ENCODE measurements at regions of chr11 and their contacts with region 1.

Region 1: DNA sequence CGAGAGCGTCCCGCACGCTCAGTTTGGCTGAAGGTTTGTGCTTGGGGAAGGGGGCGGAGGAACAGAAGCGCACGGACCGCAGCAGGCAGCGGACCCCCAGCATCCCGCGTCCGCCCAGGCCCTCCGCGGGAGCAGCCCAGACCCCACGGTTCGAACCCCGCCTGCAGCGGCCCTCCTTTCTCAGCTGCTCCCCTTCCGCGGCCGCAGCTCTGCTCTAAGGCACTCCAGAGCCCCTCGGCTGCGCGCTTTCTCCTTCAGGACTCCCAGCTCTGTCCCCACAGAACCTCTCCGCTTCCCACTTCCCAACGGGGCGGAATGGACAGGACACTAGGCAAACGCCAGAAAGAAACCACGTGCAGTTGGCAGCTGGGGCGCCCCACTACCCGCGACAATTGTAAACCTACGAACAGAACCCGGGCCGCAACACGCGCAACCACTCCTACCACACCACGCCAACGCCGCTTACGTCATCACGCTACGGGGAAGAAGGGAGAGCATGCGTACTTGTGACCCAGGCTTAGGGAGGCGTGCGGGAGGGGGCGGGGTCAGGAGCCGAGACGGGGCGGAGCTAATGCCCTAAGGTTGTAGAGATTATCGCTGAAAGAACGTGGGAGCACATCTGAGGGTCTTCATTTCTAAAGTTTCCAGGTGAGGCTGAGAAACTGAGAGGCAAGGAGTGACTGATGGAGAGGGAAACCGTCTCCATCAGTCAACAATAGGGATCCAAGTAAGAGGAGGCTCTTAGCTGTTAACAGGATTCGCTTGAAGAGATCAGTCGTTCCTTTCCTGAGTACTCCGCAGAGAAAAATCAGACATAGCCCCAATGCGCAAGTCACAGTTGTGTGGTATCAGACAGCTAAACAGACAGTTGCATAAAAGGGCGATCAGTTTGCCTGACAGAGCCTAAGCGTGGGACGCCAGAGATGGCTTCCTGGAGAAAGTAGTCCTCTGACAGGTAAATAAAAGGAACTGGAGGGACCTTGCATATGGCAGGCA is at the start of gene NARS2:
- DNase-seq: peak; percentile 95
- ATAC-seq: peak; percentile 96
- H3K4me3 Mint-ChIP-seq: peak within 1 kb of the TSS; percentile 97
- H3K27ac Mint-ChIP-seq: peak within 1 kb of the TSS; percentile 97
- H3K4me1 Mint-ChIP-seq: peaks cover 27% of the 10 kb centered on the region
- H3K27me3 Mint-ChIP-seq: no peaks in the 10 kb centered on the region
- CTCF ChIP-seq: no peak
- total RNA-seq, gene NARS2: 36.4 to 42.8 TPM (median 42.6 TPM) in 3 replicates

Region 2: GRCh38 chr11:78586452-78587046 is 11.9 kb after region 1 on chr11:
- CTCF ChIA-PET with region 1: interaction called, 10 read pairs
- POLR2A ChIA-PET with region 1: no interaction called
- DNase-seq: no peak
- ATAC-seq: 0 out of 2 replicates have a peak, but pooled peaks have one; percentile 22
- H3K4me3 Mint-ChIP-seq: no peak overlapping the region
- H3K27ac Mint-ChIP-seq: no peak overlapping the region
- H3K4me1 Mint-ChIP-seq: no peaks in the 10 kb centered on the region
- H3K27me3 Mint-ChIP-seq: peaks cover 4% of the 10 kb centered on the region; the same call in 1 of the 2 replicates
- CTCF ChIP-seq: peak; percentile 60